Activated CD4-positive, alpha-beta T cell treated with anti-CD3 and anti-CD28 coated beads, Interleukin-2, amount 10 ng/mL, durations not matched to agents 24 days and 14 days (primary cell): ENCODE measurements at regions of chr7 and their contacts with region 1.

Region 1: GRCh38 chr7:11120068-11120664 is 146.5 kb downstream of the PHF14 start:
- DNase-seq: no peak
- H3K4me3 Mint-ChIP-seq: peak overlapping the region; percentile 44
- H3K27ac Mint-ChIP-seq: peak overlapping the region; percentile 79
- H3K4me1 Mint-ChIP-seq: peaks cover 24% of the 10 kb centered on the region
- H3K27me3 Mint-ChIP-seq: no peaks in the 10 kb centered on the region

Region 2: DNA sequence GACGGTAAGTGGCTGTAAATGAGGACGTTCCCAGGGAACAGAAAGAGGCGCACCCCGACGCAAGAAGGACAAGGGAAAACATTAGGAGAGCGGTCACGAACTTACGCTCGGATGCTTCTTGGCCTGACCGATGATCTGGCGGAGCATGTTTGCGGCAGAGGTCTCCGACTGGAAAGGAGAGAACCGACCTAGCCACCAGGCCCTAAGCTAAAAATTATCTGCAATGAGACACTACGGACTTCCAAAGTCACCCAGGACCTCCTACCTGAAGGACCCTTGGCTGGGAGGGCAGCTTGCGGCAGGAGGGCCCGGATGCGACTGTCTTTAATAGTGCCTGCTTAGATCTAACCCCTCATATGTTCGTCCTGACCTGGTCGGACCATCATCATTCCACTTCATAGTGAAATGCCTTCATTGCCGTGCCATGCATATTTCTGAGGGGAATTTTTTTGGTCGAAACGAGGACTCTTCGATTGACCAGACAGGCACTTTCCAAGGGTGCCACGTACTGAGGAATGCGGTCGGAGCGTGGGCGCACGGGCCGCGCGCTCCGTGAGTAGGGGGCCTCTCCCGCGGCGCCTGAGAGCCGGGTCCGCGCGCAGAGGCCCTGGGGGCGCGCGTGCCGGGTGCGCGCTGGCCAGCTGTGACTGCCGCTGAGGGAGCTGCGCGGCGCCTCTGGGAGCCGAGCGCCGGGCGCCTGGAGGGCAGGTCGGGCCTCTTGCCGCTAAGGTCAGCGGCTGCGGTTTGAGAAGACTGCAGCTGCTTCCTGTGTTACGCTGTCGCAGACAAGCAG is 180.1 kb before region 1 on chr7:
- intact Hi-C with region 1: loop called (anchors 10 kb)
- DNase-seq: peak; percentile 96
- H3K4me3 Mint-ChIP-seq: no peak overlapping the region
- H3K27ac Mint-ChIP-seq: no peak overlapping the region
- H3K4me1 Mint-ChIP-seq: peaks cover 12% of the 10 kb centered on the region
- H3K27me3 Mint-ChIP-seq: no peaks in the 10 kb centered on the region

Region 3: DNA sequence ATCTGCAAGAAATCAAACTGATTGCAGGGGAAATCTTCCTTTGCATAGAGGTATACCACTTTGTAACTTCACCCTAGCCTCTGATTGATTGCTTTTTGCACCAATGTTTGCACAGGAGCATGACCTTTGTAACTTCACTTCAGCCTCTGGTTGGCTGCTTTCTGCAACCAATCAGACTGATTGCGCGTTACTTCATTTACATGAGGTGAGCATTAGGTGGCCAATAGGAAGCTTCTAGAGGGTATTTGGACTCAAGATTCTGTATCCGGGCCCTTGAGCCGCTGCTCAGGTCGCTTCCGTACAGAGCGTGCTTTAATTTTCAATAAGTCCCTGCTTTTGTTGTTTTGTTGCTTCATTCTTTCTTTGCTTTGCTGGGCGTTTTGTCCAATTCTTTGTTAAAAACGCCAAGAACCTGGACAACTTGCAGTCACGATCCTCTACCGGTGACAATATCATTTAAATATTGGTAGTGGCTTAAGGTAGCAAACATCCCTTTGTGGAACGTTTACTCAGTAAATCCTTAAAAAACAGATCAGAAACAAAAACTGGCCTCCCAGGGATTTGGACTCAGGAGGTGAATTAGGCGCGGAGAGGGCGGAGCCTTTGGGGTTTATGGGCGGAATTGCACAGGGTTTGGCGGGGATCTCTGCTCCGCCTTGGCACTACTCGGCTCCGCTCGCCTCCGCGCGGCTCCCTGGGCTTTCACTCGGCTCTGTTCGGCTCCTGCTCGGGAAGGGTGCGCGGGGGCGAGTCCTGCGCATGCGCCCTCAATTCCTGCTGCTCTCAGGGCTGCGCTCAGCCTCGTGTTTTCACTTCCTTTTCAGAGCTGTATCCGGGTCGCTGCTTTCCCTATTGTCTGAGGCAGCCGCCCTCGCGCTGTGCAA is 146.9 kb before region 1 on chr7 and contains the start of gene PHF14:
- intact Hi-C with region 1: loop called (anchors 2 kb)
- DNase-seq: peak; percentile 98
- H3K4me3 Mint-ChIP-seq: peak within 1 kb of the TSS; percentile 94
- H3K27ac Mint-ChIP-seq: peak within 1 kb of the TSS; percentile 93
- H3K4me1 Mint-ChIP-seq: peaks cover 32% of the 10 kb centered on the region
- H3K27me3 Mint-ChIP-seq: peaks cover 17% of the 10 kb centered on the region
- total RNA-seq, gene PHF14: 36.7 and 42.7 TPM in 2 replicates

Region 4: GRCh38 chr7:11077816-11078215 is 42.4 kb before region 1 on chr7:
- intact Hi-C with region 1: no loop called
- DNase-seq: no peak
- H3K4me3 Mint-ChIP-seq: no peak overlapping the region
- H3K27ac Mint-ChIP-seq: no peak overlapping the region
- H3K4me1 Mint-ChIP-seq: peaks cover 4% of the 10 kb centered on the region
- H3K27me3 Mint-ChIP-seq: no peaks in the 10 kb centered on the region

Region 5: GRCh38 chr7:11193131-11193811 is 73.1 kb after region 1 on chr7:
- intact Hi-C with region 1: loop called (anchors 5 kb)
- DNase-seq: no peak
- H3K4me3 Mint-ChIP-seq: peak overlapping the region; percentile 63
- H3K27ac Mint-ChIP-seq: peak overlapping the region; percentile 70
- H3K4me1 Mint-ChIP-seq: peaks cover 15% of the 10 kb centered on the region
- H3K27me3 Mint-ChIP-seq: peaks cover 2% of the 10 kb centered on the region